Heart right ventricle (tissue), 16 donors: ENCODE measurements at regions of chr6 and their contacts with region 1.

Region 1: DNA sequence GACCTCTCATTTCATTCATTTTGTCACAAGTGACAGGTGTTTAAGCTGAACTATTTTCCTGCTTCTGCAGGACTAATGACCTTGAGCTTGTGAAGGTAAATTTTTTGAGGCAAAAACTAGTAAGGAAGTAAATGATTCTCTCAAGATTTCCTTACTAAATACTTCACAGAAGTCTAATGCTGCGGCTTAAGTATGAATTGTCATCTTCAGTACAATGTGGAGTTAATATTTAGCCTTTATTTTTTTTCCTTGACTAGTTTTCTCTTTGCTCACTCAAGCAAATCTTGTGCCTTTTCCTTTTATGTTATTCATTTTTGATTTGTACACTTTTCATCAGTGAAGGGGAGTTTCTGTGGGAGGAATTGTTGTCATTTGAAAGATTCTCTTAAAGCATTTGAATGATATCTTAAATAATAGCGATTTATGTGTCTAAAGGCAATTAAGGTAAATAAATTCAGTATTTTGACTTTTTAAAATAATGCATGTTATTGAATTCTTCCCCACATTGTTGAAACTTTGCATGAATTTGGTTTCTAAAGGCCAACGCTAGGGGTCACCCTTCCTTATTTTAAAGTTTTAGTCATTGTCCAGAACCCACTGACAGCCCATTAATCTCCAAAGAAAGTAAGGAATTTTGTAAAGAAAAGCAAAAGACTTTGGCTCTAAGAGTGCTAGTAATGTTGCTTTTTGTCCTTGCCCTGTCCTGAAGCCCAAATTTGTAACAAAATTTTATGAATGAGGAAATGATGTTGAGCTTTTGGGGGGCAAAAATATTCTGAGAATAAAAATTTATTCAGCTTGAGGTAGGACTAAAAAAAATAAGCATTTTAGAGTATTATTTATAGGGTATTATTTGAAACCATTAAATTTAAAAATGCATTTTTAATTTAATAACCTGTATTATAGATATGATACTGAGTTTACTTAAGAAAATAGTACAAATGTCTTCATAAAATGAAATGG is 157.4 kb upstream of the LAMA2 start:
- DNase-seq: peak in 1 of 2 donors; percentile 28
- ATAC-seq: peak in 1 of 8 donors; percentile 41
- H3K4me3 ChIP-seq: no peak overlapping the region
- H3K27ac ChIP-seq: no peak overlapping the region
- H3K4me1 ChIP-seq: no peaks in the 10 kb centered on the region
- H3K27me3 ChIP-seq: no peaks in the 10 kb centered on the region
- CTCF ChIP-seq: peak; percentile 16 to 75 (median 64)

Region 2: DNA sequence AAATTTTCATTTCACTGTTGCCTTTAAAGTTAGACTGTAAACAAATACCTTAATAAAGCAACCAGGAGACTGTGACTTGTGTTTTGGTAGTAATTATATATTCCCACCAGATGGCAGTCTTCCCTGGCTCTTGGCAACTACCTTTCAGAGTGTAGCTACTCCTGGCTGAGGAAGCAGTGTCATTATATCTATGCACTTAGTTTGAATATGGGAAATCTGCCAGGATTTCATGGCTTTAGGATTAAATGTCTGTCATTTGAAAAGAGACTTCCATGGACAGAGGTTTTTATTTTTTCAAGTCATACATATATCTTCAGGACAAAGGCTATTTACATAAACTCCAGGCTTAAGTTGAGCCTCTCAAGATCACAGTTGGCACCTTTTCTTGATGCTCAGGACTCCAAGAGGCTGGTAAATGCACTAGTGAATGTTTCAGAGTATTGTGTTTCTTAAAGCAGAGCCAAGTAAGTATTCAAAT is 988.5 kb before region 1 on chr6:
- intact Hi-C with region 1: loop called in 8 of 10 experiments (anchors 2 to 10 kb)
- DNase-seq: peak in 1 of 2 donors; percentile 41
- ATAC-seq: peak; percentile 58 to 76 (median 67)
- H3K4me3 ChIP-seq: no peak overlapping the region
- H3K27ac ChIP-seq: no peak overlapping the region
- H3K4me1 ChIP-seq: no peaks in the 10 kb centered on the region
- H3K27me3 ChIP-seq: no peaks in the 10 kb centered on the region
- CTCF ChIP-seq: peak in 8 of 9 donors; percentile 35 to 76 (median 70)

Region 3: GRCh38 chr6:128339635-128340450 is 385.7 kb before region 1 on chr6:
- intact Hi-C with region 1: loop called in 1 of 10 experiments (anchors 10 kb)
- DNase-seq: no peak
- ATAC-seq: peak in 4 of 8 donors; percentile 44 to 58 (median 51)
- H3K4me3 ChIP-seq: no peak overlapping the region
- H3K27ac ChIP-seq: peak overlapping the region in 6 of 10 donors; percentile 15 to 64 (median 41)
- H3K4me1 ChIP-seq: peaks cover 0 to 43% (median 23%) of the 10 kb centered on the region in 9 donors
- H3K27me3 ChIP-seq: no peaks in the 10 kb centered on the region
- CTCF ChIP-seq: no peak

Region 4: GRCh38 chr6:129359811-129360681 is 634.5 kb after region 1 on chr6:
- intact Hi-C with region 1: loop called in 1 of 10 experiments (anchors 10 kb)
- DNase-seq: no peak
- ATAC-seq: no peak
- H3K4me3 ChIP-seq: no peak overlapping the region
- H3K27ac ChIP-seq: no peak overlapping the region
- H3K4me1 ChIP-seq: peaks cover 0 to 25% (median 12%) of the 10 kb centered on the region in 9 donors
- H3K27me3 ChIP-seq: no peaks in the 10 kb centered on the region
- CTCF ChIP-seq: no peak

Region 5: DNA sequence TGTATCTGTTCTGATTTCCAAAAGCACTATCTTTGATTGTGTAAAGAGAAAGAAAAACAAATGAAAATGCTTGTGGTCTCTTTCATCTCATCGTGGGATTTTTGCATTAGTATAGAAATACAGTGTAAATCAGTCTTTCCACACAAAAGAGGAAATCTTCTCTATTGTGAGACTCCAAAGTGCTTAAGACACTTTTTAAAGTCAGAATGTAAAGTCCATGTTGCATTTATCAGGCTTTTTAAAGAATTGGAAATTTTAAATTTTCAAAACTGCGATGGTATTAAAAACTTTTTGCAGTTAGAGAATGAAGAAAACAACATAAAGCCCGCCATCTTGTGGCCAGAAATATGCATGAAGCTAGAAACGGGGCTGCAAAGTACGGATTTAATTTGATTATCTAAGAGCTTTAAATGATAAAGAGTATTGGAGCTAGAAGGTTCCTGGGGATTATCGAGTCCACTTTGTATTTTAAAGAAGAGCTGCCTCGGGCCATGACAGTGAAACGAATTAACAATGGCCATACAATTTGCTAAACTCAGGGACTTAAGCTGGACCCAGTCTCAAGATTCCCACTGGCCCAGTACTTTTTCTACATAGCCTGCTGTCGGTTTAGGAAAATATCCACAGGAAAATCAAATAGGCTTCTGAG is 644.8 kb after region 1 on chr6:
- intact Hi-C with region 1: loop called in 4 of 10 experiments (anchors 5 to 10 kb)
- DNase-seq: peak in 1 of 2 donors; percentile 38
- ATAC-seq: peak in 2 of 8 donors; percentile 25 to 32
- H3K4me3 ChIP-seq: no peak overlapping the region
- H3K27ac ChIP-seq: peak overlapping the region in 6 of 10 donors; percentile 42 to 71 (median 63)
- H3K4me1 ChIP-seq: peaks cover 0 to 26% (median 12%) of the 10 kb centered on the region in 9 donors
- H3K27me3 ChIP-seq: no peaks in the 10 kb centered on the region
- CTCF ChIP-seq: peak; percentile 42 to 78 (median 72)